Prostate gland (tissue), 2 donors: ENCODE measurements at regions of chr6 and their contacts with region 1.

Region 1: GRCh38 chr6:119078376-119079282 is at the start of gene FAM184A:
- DNase-seq: peak; percentile 51
- H3K4me3 ChIP-seq: peak within 1 kb of the TSS; percentile 70 to 75
- H3K27ac ChIP-seq: peak within 1 kb of the TSS; percentile 73 to 83
- H3K4me1 ChIP-seq: no peaks in the 10 kb centered on the region
- H3K27me3 ChIP-seq: no peaks in the 10 kb centered on the region
- CTCF ChIP-seq: peak in 2 of 4 experiments; percentile 28 to 36
- POLR2A ChIP-seq: peak; percentile 46
- total RNA-seq, gene FAM184A: 3.6 to 7.6 TPM

Region 2: GRCh38 chr6:118893807-118894424 is 184.7 kb before region 1 on chr6 and contains the start of gene ASF1A:
- intact Hi-C with region 1: loop called (anchors 5 kb)
- DNase-seq: peak; percentile 97
- H3K4me3 ChIP-seq: peak within 1 kb of the TSS; percentile 75 to 80
- H3K27ac ChIP-seq: peak within 1 kb of the TSS; percentile 92 to 95
- H3K4me1 ChIP-seq: no peaks in the 10 kb centered on the region
- H3K27me3 ChIP-seq: no peaks in the 10 kb centered on the region
- CTCF ChIP-seq: peak; percentile 24 to 83 (median 65)
- POLR2A ChIP-seq: peak; percentile 82
- total RNA-seq, gene ASF1A: 12.5 to 15.6 TPM

Region 3: DNA sequence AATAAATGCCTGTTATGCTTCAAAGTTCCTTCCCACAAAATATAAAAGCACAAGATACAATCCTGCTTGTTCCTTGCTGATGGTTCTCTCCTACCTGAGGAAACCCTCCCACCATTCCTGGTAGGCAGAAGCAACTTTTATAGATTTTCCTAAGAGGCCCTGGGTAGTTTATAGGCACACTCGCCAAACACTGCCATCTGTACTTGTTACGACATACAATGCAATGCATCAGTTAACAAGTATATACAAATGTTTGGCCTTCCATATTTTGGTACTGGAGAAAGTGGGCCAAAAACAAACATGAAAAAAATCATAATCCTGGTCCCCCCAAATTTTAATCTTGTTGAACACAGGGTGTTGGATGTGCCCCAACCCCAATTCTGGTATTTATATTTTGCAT is 160.3 kb before region 1 on chr6:
- intact Hi-C with region 1: no loop called
- DNase-seq: no peak
- H3K4me3 ChIP-seq: no peak overlapping the region
- H3K27ac ChIP-seq: no peak overlapping the region
- H3K4me1 ChIP-seq: no peaks in the 10 kb centered on the region
- H3K27me3 ChIP-seq: no peaks in the 10 kb centered on the region
- CTCF ChIP-seq: no peak
- POLR2A ChIP-seq: no peak